B cell (primary cell): ENCODE measurements at regions of chr11 and their contacts with region 1.

Region 1: GRCh38 chr11:72091005-72091691 is 10.5 kb downstream of the LRRC51 start:
- DNase-seq: peak; percentile 85
- ATAC-seq: peak; percentile 99
- H3K4me3 ChIP-seq: no peak overlapping the region
- H3K4me3 Mint-ChIP-seq: no peak overlapping the region
- H3K27ac ChIP-seq: peak overlapping the region; percentile 7 to 25
- H3K27ac Mint-ChIP-seq: peak overlapping the region; percentile 73
- H3K4me1 ChIP-seq: peaks cover 7 to 14% of the 10 kb centered on the region in 2 donors
- H3K4me1 Mint-ChIP-seq: peaks cover 16% of the 10 kb centered on the region
- H3K27me3 ChIP-seq: no peaks in the 10 kb centered on the region
- H3K27me3 Mint-ChIP-seq: no peaks in the 10 kb centered on the region
- CTCF ChIP-seq: peak; percentile 82

Region 2: GRCh38 chr11:71928737-71929452 is 162.3 kb before region 1 on chr11 and contains the start of gene RNF121:
- CTCF ChIA-PET with region 1: interaction called, 11 read pairs
- POLR2A ChIA-PET with region 1: no interaction called
- intact Hi-C with region 1: no loop called
- DNase-seq: peak; percentile 97
- ATAC-seq: peak; percentile 91
- H3K4me3 ChIP-seq: peak within 1 kb of the TSS; percentile 89 to 100 (median 99)
- H3K4me3 Mint-ChIP-seq: peak within 1 kb of the TSS; percentile 96
- H3K27ac ChIP-seq: peak within 1 kb of the TSS; percentile 92 to 93
- H3K27ac Mint-ChIP-seq: peak within 1 kb of the TSS; percentile 98
- H3K4me1 ChIP-seq: peaks cover 35 to 46% of the 10 kb centered on the region in 2 donors
- H3K4me1 Mint-ChIP-seq: peaks cover 59% of the 10 kb centered on the region
- H3K27me3 ChIP-seq: no peaks in the 10 kb centered on the region
- H3K27me3 Mint-ChIP-seq: no peaks in the 10 kb centered on the region
- CTCF ChIP-seq: no peak
- total RNA-seq, gene RNF121: 54.5 and 56.0 TPM in 2 replicates

Region 3: DNA sequence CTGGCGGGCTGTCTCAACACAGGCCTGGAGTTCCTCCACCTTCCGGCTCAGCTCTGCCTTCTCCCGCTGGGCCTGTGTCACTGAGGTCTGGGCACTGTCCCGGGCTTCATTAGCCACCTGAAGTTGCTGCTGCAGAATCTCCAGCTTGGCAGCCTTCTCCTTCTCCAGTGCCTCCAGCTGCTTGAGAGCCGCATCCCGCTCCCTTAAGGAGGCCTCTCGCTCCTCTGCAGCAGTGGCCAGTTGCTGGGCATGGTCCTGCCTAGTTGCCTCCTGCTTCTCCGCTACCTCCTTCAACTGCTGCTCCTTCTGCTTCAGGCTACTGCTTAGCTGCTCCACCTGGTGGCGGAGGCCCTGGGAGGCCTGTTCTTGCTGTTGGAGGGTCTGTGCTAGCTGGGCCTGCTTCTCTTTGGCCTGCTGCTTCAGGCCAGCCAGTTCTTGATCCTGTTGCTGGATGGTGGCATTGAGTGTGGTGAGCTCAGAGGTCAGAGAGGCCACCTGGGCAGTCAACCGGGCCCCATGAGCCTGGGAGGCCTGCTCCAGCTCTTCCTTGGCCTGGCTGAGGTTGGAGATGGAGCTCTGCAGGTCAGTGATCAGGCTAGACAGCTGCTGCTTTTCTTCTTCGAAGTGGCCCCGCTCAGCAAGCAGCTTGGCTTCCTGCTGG is 75.5 kb before region 1 on chr11:
- CTCF ChIA-PET with region 1: interaction called, 292 read pairs
- POLR2A ChIA-PET with region 1: no interaction called
- intact Hi-C with region 1: no loop called
- DNase-seq: peak; percentile 44
- ATAC-seq: no peak
- H3K4me3 ChIP-seq: no peak overlapping the region
- H3K4me3 Mint-ChIP-seq: no peak overlapping the region
- H3K27ac ChIP-seq: no peak overlapping the region
- H3K27ac Mint-ChIP-seq: peak overlapping the region; percentile 46
- H3K4me1 ChIP-seq: no peaks in the 10 kb centered on the region
- H3K4me1 Mint-ChIP-seq: no peaks in the 10 kb centered on the region
- H3K27me3 ChIP-seq: no peaks in the 10 kb centered on the region
- H3K27me3 Mint-ChIP-seq: no peaks in the 10 kb centered on the region
- CTCF ChIP-seq: peak; percentile 29

Region 4: DNA sequence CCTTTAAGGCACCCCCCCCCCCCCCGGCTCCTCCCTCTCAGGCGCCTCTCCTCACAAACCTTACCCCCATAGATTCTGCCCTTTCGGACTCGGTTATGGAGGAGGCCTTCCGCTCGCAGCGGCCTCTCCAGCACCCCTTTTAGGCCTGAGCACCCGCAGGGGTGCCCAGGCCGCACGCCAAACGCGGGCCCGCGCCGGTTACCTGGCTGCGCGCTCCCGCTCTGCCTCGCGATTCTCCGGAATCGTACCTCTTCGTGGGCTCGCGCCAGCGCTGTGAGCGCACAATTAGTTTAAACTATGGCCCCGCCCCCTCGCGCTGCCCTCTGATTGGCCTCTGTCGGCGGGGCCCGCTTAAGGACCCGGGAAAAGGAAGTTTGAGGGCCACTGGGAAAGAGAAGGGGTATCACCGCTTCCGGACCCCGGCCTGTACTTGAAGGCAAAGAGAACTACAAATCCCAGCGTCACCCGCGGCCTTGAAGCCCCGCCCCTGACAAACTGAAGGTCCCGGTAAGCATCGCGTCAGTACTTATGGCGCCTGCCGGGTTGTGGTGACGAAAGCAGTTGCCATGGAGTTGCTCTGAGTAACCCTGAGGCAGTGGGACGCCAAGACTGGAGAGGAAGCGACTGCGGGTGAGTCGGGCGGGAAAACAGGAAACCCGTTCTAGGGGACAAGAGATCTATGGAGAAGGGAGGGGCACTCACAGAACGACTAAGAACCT is 10.7 kb before region 1 on chr11 and contains the starts of genes LRRC51 and NUMA1:
- CTCF ChIA-PET with region 1: interaction called, 28 read pairs
- POLR2A ChIA-PET with region 1: no interaction called
- intact Hi-C with region 1: loop called (anchors 1 kb)
- DNase-seq: peak; percentile 100
- ATAC-seq: peak; percentile 90
- H3K4me3 ChIP-seq: peak within 1 kb of the TSS; percentile 61 to 84 (median 77)
- H3K4me3 Mint-ChIP-seq: peak within 1 kb of the TSS; percentile 87
- H3K27ac ChIP-seq: peak within 1 kb of the TSS; percentile 78 to 90
- H3K27ac Mint-ChIP-seq: peak within 1 kb of the TSS; percentile 87
- H3K4me1 ChIP-seq: peaks cover 15 to 23% of the 10 kb centered on the region in 2 donors
- H3K4me1 Mint-ChIP-seq: peaks cover 41% of the 10 kb centered on the region
- H3K27me3 ChIP-seq: no peaks in the 10 kb centered on the region
- H3K27me3 Mint-ChIP-seq: no peaks in the 10 kb centered on the region
- CTCF ChIP-seq: no peak
- total RNA-seq, gene LRRC51: 5.5 and 7.7 TPM in 2 replicates
- total RNA-seq, gene NUMA1: 297 and 300 TPM in 2 replicates

Region 5: GRCh38 chr11:72112321-72113219 is 21.4 kb after region 1 on chr11 and contains the start of gene ANAPC15:
- CTCF ChIA-PET with region 1: interaction called, 14 read pairs
- POLR2A ChIA-PET with region 1: interaction called, 6 read pairs
- intact Hi-C with region 1: no loop called
- DNase-seq: peak; percentile 99
- ATAC-seq: peak; percentile 89
- H3K4me3 ChIP-seq: peak within 1 kb of the TSS; percentile 67 to 94 (median 78)
- H3K4me3 Mint-ChIP-seq: peak within 1 kb of the TSS; percentile 93
- H3K27ac ChIP-seq: peak within 1 kb of the TSS; percentile 95
- H3K27ac Mint-ChIP-seq: peak within 1 kb of the TSS; percentile 98
- H3K4me1 ChIP-seq: peaks cover 14 to 19% of the 10 kb centered on the region in 2 donors
- H3K4me1 Mint-ChIP-seq: peaks cover 20% of the 10 kb centered on the region
- H3K27me3 ChIP-seq: peaks cover 0 to 12% (median 0%) of the 10 kb centered on the region in 4 experiments
- H3K27me3 Mint-ChIP-seq: peaks cover 14% of the 10 kb centered on the region
- CTCF ChIP-seq: no peak
- total RNA-seq, gene ANAPC15: 27.1 and 29.2 TPM in 2 replicates

Region 6: DNA sequence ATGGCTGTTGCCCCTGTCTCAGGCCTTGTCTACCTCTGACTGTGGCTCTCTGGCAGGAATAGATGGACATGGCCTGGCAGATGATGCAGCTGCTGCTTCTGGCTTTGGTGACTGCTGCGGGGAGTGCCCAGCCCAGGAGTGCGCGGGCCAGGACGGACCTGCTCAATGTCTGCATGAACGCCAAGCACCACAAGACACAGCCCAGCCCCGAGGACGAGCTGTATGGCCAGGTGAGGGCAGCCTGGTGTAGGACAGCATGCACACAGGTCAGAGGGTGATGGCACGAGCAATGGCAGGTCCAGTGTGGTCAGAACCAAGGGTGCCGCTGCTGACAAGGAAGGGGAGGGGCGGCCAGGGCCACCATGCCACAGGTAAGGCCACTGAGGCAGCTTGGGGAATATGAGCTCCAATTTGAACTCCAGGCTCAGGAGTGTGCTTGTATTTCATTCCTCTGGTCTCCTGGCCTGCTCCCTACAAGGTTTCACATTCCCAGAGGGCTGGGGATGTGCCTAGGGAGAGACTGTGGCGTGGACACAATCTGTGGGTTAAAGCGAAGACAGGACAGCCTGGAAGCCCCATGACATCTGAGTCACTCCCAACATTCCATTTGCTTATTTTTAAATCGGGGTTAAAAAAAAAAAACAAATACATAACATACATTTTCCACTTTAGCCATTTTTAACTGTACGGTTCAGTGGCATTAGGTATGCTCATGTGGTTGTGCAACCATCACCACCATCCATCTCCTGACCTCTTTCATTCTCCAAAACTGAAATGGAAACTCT is 44.9 kb after region 1 on chr11:
- CTCF ChIA-PET with region 1: no interaction called
- POLR2A ChIA-PET with region 1: no interaction called
- intact Hi-C with region 1: no loop called
- DNase-seq: no peak
- ATAC-seq: no peak
- H3K4me3 ChIP-seq: peak overlapping the region in 1 of 5 experiments; percentile 11
- H3K4me3 Mint-ChIP-seq: no peak overlapping the region
- H3K27ac ChIP-seq: no peak overlapping the region
- H3K27ac Mint-ChIP-seq: no peak overlapping the region
- H3K4me1 ChIP-seq: no peaks in the 10 kb centered on the region
- H3K4me1 Mint-ChIP-seq: no peaks in the 10 kb centered on the region
- H3K27me3 ChIP-seq: peaks cover 0 to 5% (median 4%) of the 10 kb centered on the region in 4 experiments
- H3K27me3 Mint-ChIP-seq: peaks cover 18% of the 10 kb centered on the region
- CTCF ChIP-seq: no peak